ENCODE measurements at regions of chr11 and their contacts with region 1.

Region 1: DNA sequence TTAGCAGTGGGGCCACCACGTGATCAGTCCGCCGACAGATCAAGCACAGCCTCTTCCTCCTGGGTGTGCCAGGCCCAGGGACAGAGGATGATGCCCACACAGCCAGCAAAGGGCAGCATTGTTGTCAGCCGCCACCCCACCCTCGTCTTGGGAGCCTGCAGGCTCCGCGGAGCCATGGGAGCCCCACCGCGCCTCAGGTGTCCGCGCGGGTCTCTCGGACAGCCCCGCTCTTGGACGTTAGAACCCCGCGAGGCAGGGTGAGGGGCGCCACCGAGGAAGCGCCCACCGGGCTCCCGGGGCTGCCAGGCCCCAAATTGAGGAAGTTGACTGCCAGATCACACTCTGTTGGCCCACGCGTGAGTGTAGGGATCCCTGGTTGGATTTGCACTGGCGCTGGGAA is 83.9 kb upstream of the MS4A8 start:
- DNase-seq: no peak
- ATAC-seq: no peak
- H3K4me3 ChIP-seq: no peak overlapping the region
- H3K4me3 Mint-ChIP-seq: no peak overlapping the region
- H3K27ac ChIP-seq: no peak overlapping the region
- H3K27ac Mint-ChIP-seq: no peak overlapping the region
- H3K4me1 ChIP-seq: peaks cover 4% of the 10 kb centered on the region
- H3K4me1 Mint-ChIP-seq: no peaks in the 10 kb centered on the region
- H3K27me3 ChIP-seq: no peaks in the 10 kb centered on the region
- H3K27me3 Mint-ChIP-seq: peaks cover 18% of the 10 kb centered on the region
- CTCF ChIP-seq: no peak

Region 2: DNA sequence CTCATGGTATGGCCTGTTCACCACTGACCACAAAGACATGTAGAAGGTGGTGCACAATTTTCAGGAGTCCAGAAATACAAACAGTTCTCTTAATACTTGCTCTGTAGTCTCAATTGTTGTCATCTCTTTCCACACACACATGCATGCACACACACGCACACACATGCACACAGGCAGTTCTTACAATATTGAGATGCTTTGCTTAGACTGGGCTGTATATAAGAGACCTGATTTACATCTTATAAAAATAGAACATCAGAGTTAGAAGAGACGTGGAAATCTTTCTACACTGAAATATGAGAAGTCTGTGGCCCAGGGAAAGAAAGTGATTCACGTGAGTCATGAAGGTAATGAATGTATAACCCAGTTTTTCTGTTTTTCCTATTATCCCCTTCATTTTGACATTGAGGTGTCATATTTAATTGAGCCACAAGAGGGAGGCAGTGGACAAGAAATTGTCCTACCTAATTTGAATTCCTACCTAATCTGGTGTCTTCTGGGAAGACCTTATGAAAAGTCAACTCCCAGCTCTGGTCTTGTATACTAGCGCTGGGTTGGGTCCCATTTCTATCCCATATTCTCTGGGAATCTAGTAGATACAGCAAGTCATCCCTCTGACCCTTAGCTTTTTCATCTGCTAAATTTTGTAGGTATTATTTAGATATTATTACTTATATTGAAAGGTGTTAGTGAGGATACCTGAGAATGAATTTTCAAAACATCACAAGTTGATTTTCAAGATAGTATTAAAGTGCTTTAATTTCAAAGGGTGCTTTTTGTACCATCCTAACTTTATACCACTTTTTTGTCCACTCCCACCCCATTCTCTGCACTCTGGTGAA is 349.9 kb before region 1 on chr11:
- CTCF ChIA-PET with region 1: no interaction called
- POLR2A ChIA-PET with region 1: no interaction called
- intact Hi-C with region 1: loop called in 1 of 2 experiments (anchors 5 kb)
- DNase-seq: peak in 3 of 14 experiments; percentile 24 to 51 (median 46)
- ATAC-seq: no peak
- H3K4me3 ChIP-seq: no peak overlapping the region
- H3K4me3 Mint-ChIP-seq: no peak overlapping the region
- H3K27ac ChIP-seq: no peak overlapping the region
- H3K27ac Mint-ChIP-seq: no peak overlapping the region
- H3K4me1 ChIP-seq: no peaks in the 10 kb centered on the region
- H3K4me1 Mint-ChIP-seq: no peaks in the 10 kb centered on the region
- H3K27me3 ChIP-seq: no peaks in the 10 kb centered on the region
- H3K27me3 Mint-ChIP-seq: peaks cover 9% of the 10 kb centered on the region
- CTCF ChIP-seq: peak; percentile 64

Region 3: DNA sequence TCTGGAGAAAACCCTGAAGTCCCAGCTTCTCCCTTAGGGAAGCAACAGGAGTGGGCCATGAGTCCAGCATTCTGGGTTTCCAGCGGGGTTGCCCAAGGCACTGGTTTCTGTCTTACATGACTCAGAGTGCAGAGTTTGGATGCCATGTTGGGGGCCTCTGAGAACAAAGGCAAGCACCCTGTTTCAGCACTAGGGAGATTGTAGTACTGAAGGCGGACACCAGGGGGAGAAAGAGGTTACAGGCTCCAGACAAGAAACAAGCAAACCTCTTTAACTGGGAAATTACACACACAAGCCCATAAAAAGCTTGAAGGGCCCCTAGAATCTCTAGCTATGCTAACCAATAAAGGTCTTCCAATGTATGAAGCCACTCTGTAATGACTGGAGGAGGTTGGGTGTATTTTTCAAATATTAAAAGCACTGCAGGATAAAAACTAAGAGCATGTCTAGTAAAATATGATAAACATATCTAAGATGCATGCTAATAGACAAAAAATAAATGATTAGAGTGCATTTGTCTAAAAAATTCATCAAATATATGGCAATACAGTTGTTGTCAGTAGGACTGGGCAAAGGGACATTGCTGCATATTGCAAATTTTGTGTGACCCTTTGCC is 281.4 kb before region 1 on chr11:
- CTCF ChIA-PET with region 1: no interaction called
- POLR2A ChIA-PET with region 1: no interaction called
- intact Hi-C with region 1: loop called in 1 of 2 experiments (anchors 1 kb)
- DNase-seq: peak; percentile 10 to 75 (median 49)
- ATAC-seq: peak; percentile 34
- H3K4me3 ChIP-seq: no peak overlapping the region
- H3K4me3 Mint-ChIP-seq: no peak overlapping the region
- H3K27ac ChIP-seq: no peak overlapping the region
- H3K27ac Mint-ChIP-seq: no peak overlapping the region
- H3K4me1 ChIP-seq: peaks cover 2% of the 10 kb centered on the region
- H3K4me1 Mint-ChIP-seq: no peaks in the 10 kb centered on the region
- H3K27me3 ChIP-seq: no peaks in the 10 kb centered on the region
- H3K27me3 Mint-ChIP-seq: peaks cover 8% of the 10 kb centered on the region
- CTCF ChIP-seq: peak; percentile 75

Region 4: DNA sequence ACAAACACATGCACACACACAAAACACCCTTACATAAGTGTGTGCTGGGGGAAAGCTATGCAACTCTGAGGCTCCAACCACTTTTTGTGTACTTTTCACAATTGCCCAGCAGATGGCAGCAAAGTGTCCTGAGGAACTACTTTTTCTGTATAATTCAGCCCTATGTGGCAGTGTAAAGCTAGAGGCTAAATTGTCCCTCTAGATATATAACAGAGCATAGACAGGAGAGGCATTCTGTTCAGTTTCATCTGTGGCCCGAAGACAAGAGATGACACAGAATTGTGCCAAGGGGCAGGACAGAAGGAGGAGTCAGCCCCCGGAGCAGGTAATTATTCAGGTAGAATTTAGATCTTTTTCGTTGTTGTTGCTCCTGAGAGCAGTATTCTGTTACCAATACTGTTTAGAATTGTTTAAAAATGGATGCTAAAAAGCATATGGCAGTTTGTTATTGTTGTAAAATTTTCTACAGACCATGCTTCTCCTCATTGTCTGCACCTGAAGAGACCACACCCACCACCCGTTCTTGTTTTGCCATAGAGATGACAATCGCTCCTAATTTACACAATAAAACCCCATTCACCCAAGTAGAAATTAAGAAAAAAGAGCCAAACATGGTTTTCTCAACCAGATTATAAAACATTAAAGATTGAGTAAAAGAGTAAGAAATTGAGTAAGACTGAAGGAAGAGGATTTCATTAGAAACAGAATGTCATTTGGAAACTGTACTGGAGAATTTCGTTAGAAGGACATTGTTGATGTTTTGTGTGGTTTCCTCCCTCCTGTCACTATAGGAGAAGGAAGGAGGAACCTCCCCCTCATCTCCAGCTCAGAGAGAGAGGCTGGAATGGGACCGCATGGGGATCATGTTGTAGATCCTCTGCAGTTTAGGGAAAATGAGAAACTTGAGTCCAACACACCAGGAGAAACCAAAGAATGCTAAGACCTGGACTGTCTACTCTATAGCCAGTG is 251.7 kb before region 1 on chr11:
- CTCF ChIA-PET with region 1: interaction called, 6 read pairs
- POLR2A ChIA-PET with region 1: no interaction called
- intact Hi-C with region 1: loop called (anchors 1 to 2 kb)
- DNase-seq: peak; percentile 6 to 77 (median 38)
- ATAC-seq: peak; percentile 37
- H3K4me3 ChIP-seq: no peak overlapping the region
- H3K4me3 Mint-ChIP-seq: no peak overlapping the region
- H3K27ac ChIP-seq: no peak overlapping the region
- H3K27ac Mint-ChIP-seq: no peak overlapping the region
- H3K4me1 ChIP-seq: no peaks in the 10 kb centered on the region
- H3K4me1 Mint-ChIP-seq: no peaks in the 10 kb centered on the region
- H3K27me3 ChIP-seq: peaks cover under 1 to 4% of the 10 kb centered on the region in 2 experiments
- H3K27me3 Mint-ChIP-seq: peaks cover 17% of the 10 kb centered on the region
- CTCF ChIP-seq: peak; percentile 87

Region 5: GRCh38 chr11:60634126-60634525 is 18.6 kb after region 1 on chr11:
- CTCF ChIA-PET with region 1: no interaction called
- POLR2A ChIA-PET with region 1: no interaction called
- intact Hi-C with region 1: no loop called
- DNase-seq: no peak
- ATAC-seq: no peak
- H3K4me3 ChIP-seq: no peak overlapping the region
- H3K4me3 Mint-ChIP-seq: no peak overlapping the region
- H3K27ac ChIP-seq: no peak overlapping the region
- H3K27ac Mint-ChIP-seq: no peak overlapping the region
- H3K4me1 ChIP-seq: no peaks in the 10 kb centered on the region
- H3K4me1 Mint-ChIP-seq: no peaks in the 10 kb centered on the region
- H3K27me3 ChIP-seq: peaks cover 0 to 12% of the 10 kb centered on the region in 2 experiments
- H3K27me3 Mint-ChIP-seq: peaks cover 45% of the 10 kb centered on the region
- CTCF ChIP-seq: no peak

Measured in CD4-positive, alpha-beta T cell (primary cell).